Natural killer cell (primary cell): ENCODE measurements at regions of chr7 and their contacts with region 1.

Region 1: GRCh38 chr7:35856175-35856574 is 55.3 kb downstream of the SEPTIN7 start:
- DNase-seq: no peak
- ATAC-seq: no peak
- H3K4me3 ChIP-seq: no peak overlapping the region
- H3K4me3 Mint-ChIP-seq: peak overlapping the region; percentile 10
- H3K27ac ChIP-seq: no peak overlapping the region
- H3K27ac Mint-ChIP-seq: no peak overlapping the region
- H3K4me1 ChIP-seq: peaks cover 8% of the 10 kb centered on the region
- H3K4me1 Mint-ChIP-seq: peaks cover 70 to 73% of the 10 kb centered on the region in 2 donors
- H3K27me3 ChIP-seq: no peaks in the 10 kb centered on the region
- H3K27me3 Mint-ChIP-seq: no peaks in the 10 kb centered on the region
- CTCF ChIP-seq: no peak

Region 2: GRCh38 chr7:35729061-35729783 is 127.0 kb before region 1 on chr7:
- intact Hi-C with region 1: no loop called
- DNase-seq: peak; percentile 66 to 81
- ATAC-seq: peak; percentile 71 to 91 (median 83)
- H3K4me3 ChIP-seq: no peak overlapping the region
- H3K4me3 Mint-ChIP-seq: peak overlapping the region; percentile 84
- H3K27ac ChIP-seq: peak overlapping the region; percentile 88
- H3K27ac Mint-ChIP-seq: peak overlapping the region; percentile 96 to 97
- H3K4me1 ChIP-seq: peaks cover 71% of the 10 kb centered on the region
- H3K4me1 Mint-ChIP-seq: peaks cover 59 to 76% of the 10 kb centered on the region in 2 donors
- H3K27me3 ChIP-seq: no peaks in the 10 kb centered on the region
- H3K27me3 Mint-ChIP-seq: peaks cover 0 to 4% of the 10 kb centered on the region in 2 donors
- CTCF ChIP-seq: no peak

Region 3: DNA sequence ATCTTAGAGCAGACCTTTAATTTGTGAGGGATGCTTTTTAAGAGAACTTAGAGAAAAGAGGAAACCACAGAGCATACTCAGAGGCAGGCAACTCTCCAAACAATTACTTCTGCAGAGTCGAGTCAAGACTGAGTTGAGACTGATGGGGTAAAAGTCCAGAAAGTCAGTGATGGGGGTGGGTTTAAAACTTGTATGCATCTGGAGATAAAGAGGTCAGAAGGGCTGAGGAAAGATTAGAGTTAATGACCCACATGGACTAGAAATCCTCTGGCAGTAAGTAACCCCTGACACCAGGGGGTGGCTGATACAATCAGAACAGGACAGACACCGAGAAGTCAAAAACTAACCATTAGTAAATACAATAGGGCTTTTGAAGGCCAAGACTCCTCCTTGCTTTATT is 97.8 kb before region 1 on chr7:
- intact Hi-C with region 1: no loop called
- DNase-seq: peak in 1 of 2 donors; percentile 49
- ATAC-seq: peak; percentile 54 to 70 (median 63)
- H3K4me3 ChIP-seq: no peak overlapping the region
- H3K4me3 Mint-ChIP-seq: no peak overlapping the region
- H3K27ac ChIP-seq: no peak overlapping the region
- H3K27ac Mint-ChIP-seq: peak overlapping the region in 1 of 2 donors; percentile 35
- H3K4me1 ChIP-seq: no peaks in the 10 kb centered on the region
- H3K4me1 Mint-ChIP-seq: peaks cover 8 to 12% of the 10 kb centered on the region in 2 donors
- H3K27me3 ChIP-seq: no peaks in the 10 kb centered on the region
- H3K27me3 Mint-ChIP-seq: peaks cover 0 to 4% of the 10 kb centered on the region in 2 donors
- CTCF ChIP-seq: no peak

Region 4: GRCh38 chr7:35816514-35816913 is 39.7 kb before region 1 on chr7:
- intact Hi-C with region 1: loop called (anchors 5 kb)
- DNase-seq: no peak
- ATAC-seq: no peak
- H3K4me3 ChIP-seq: no peak overlapping the region
- H3K4me3 Mint-ChIP-seq: peak overlapping the region; percentile 35
- H3K27ac ChIP-seq: no peak overlapping the region
- H3K27ac Mint-ChIP-seq: peak overlapping the region; percentile 21 to 78
- H3K4me1 ChIP-seq: peaks cover 18% of the 10 kb centered on the region
- H3K4me1 Mint-ChIP-seq: peaks cover 85 to 89% of the 10 kb centered on the region in 2 donors
- H3K27me3 ChIP-seq: no peaks in the 10 kb centered on the region
- H3K27me3 Mint-ChIP-seq: no peaks in the 10 kb centered on the region
- CTCF ChIP-seq: no peak